Aorta (tissue), 5 donors: ENCODE measurements at regions of chr9 and their contacts with region 1.

Region 1: GRCh38 chr9:104991144-104991953 is 63.4 kb upstream of the ABCA1 start:
- DNase-seq: peak; percentile 95 to 96
- ATAC-seq: peak; percentile 95
- H3K4me3 ChIP-seq: peak overlapping the region; percentile 44 to 88
- H3K27ac ChIP-seq: peak overlapping the region; percentile 83 to 87
- H3K4me1 ChIP-seq: peaks cover 0 to 10% of the 10 kb centered on the region in 2 donors
- H3K27me3 ChIP-seq: no peaks in the 10 kb centered on the region

Region 2: GRCh38 chr9:104856413-104856941 is 134.9 kb before region 1 on chr9:
- intact Hi-C with region 1: loop called in 1 of 2 experiments (anchors 5 kb)
- DNase-seq: no peak
- ATAC-seq: no peak
- H3K4me3 ChIP-seq: no peak overlapping the region
- H3K27ac ChIP-seq: no peak overlapping the region
- H3K4me1 ChIP-seq: peaks cover 0 to 4% of the 10 kb centered on the region in 2 donors
- H3K27me3 ChIP-seq: no peaks in the 10 kb centered on the region

Region 3: DNA sequence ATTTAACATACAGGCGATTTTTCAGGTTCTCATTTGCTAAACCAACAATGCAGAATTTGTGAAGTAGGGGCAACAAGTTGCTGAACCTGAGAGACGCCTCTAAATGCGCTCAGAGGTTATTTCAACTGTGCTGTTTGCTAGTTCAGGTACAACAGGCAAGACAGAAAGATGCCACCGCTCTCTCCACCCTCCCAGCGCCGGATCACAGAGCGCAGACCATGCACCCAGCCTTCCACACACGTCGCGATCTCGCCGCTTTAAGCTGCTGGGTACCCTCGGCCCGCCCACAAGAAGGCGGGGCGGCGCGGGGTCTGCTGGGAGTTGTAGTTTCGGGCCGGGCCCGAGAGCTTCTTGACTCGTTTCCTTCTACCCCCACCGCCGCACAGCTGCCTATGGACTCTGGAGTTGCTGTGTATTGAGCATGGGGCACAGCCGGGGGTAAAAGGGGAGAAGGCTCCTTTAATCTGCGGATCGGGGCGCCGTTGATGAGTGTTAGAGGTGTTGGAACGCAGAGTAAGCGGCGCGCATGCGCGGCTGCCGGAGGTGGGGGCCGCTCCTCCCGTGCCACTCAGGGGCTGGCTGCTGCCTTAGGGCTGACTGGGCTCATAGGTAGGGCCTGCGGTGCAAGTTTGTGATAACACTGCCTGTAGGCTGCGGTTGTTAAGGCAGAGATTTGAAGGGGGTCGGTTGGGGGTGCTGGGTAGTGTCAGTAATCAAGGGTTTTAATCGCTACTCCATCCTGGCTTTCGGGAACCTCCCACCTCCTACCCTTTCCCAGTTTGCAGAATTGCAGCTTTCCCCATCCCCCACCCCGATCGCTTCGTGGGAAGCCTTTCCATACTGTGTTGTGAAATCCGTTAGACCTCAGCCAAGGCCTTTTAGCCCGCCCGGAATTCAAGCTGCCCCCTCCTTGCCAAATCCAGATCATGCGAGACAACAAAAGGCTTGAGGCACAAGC is 23.0 kb before region 1 on chr9:
- intact Hi-C with region 1: loop called in 1 of 2 experiments (anchors 2 kb)
- DNase-seq: peak; percentile 92 to 96
- ATAC-seq: peak; percentile 97
- H3K4me3 ChIP-seq: peak overlapping the region; percentile 43 to 75
- H3K27ac ChIP-seq: peak overlapping the region in 1 of 2 donors; percentile 60
- H3K4me1 ChIP-seq: no peaks in the 10 kb centered on the region
- H3K27me3 ChIP-seq: no peaks in the 10 kb centered on the region